MCF 10A (cell line): ENCODE measurements at regions of chr1 and their contacts with region 1.

Region 1: DNA sequence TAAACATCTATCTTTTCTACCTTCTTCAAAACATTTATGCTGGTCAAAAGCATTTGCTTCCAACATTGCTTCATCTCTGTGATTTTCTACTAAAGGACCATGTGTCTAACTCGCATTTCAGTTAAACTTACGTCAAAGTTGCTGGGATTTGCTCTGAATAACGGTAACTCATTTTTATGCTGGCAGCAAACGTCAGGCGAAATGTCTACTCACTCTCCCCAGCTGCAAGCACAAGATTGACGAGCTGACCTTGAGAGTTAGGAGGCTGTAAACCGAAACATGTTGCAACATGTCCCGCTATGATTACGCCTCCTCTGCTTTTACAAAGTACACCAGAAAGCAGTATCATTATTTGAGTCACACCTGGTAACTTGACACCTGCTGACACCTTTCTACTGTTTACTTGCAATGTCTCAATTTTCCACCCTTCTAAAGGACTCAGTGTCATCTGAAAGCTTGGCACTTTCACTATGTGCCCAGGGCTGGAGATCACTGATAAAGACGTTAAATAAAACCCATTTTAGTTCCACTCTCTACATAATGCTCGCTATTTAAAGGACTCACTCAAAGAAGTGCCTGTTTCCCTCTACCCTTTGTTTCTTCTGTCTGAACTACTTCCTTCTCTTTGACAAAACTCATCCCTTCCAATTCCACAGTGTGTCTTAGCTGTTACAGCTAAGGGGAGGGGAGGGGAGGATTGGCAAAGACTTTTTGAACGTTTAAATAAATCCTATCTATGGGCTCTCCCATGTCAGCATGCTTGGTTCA is 111.9 kb downstream of the PTPN14 start:
- DNase-seq: peak; percentile 100
- H3K4me3 Mint-ChIP-seq: peak overlapping the region; percentile 65
- H3K27ac Mint-ChIP-seq: peak overlapping the region; percentile 99
- H3K4me1 Mint-ChIP-seq: peaks cover 61% of the 10 kb centered on the region
- H3K27me3 Mint-ChIP-seq: no peaks in the 10 kb centered on the region
- CTCF ChIP-seq: no peak

Region 2: DNA sequence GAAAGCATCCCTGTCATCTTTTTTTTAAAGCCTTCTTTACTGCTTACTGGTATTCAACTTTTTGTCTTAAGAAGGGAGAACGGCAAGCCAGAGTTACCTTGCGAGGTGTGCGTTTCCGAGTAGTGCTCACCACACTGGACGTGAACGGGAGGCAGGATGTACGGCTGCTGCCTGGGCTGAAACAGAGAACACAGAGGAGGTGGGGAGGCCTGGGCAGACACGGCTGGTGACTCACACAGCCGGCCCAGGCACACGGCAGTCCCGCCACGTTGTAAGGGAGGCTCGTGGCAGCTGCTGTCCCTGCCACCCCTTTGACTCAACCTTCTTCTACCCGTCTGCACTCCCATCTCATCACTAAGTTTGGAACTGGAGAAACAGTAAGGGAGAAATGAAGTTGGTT is 52.8 kb before region 1 on chr1:
- CTCF ChIA-PET with region 1: interaction called, 4 read pairs
- POLR2A ChIA-PET with region 1: interaction called, 10 read pairs
- intact Hi-C with region 1: no loop called
- DNase-seq: peak; percentile 83
- H3K4me3 Mint-ChIP-seq: no peak overlapping the region
- H3K27ac Mint-ChIP-seq: peak overlapping the region; percentile 76
- H3K4me1 Mint-ChIP-seq: peaks cover 14% of the 10 kb centered on the region
- H3K27me3 Mint-ChIP-seq: no peaks in the 10 kb centered on the region
- CTCF ChIP-seq: no peak

Region 3: GRCh38 chr1:214416417-214416816 is 23.1 kb before region 1 on chr1:
- CTCF ChIA-PET with region 1: interaction called, 8 read pairs
- POLR2A ChIA-PET with region 1: interaction called, 143 read pairs
- intact Hi-C with region 1: loop called (anchors 2 kb)
- DNase-seq: peak; percentile 80
- H3K4me3 Mint-ChIP-seq: no peak overlapping the region
- H3K27ac Mint-ChIP-seq: peak overlapping the region; percentile 69
- H3K4me1 Mint-ChIP-seq: peaks cover 67% of the 10 kb centered on the region
- H3K27me3 Mint-ChIP-seq: no peaks in the 10 kb centered on the region
- CTCF ChIP-seq: no peak

Region 4: DNA sequence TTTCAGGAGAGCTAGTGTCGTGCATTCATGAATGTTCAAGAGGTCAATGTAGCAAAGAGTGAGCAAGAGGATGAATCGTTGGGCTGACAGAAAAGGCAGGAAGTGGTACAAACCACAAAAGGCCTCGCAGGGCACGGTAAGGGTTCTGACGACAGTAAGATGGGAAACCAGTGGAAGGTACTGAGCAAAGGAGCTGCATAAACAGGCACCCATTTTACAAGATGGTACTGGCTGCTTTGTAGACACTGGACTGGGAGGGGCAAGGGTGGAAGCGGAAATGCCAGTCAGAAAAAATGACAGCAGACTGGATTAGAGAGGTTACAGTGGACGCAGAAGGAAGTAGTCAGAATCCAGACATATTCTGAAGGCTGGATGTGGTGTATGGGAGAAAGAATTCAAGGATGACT is 11.7 kb before region 1 on chr1:
- CTCF ChIA-PET with region 1: interaction called, 10 read pairs
- POLR2A ChIA-PET with region 1: interaction called, 143 read pairs
- intact Hi-C with region 1: loop called (anchors 1 kb)
- DNase-seq: peak; percentile 97
- H3K4me3 Mint-ChIP-seq: peak overlapping the region; percentile 15
- H3K27ac Mint-ChIP-seq: peak overlapping the region; percentile 82
- H3K4me1 Mint-ChIP-seq: peaks cover 63% of the 10 kb centered on the region
- H3K27me3 Mint-ChIP-seq: no peaks in the 10 kb centered on the region
- CTCF ChIP-seq: no peak

Region 5: DNA sequence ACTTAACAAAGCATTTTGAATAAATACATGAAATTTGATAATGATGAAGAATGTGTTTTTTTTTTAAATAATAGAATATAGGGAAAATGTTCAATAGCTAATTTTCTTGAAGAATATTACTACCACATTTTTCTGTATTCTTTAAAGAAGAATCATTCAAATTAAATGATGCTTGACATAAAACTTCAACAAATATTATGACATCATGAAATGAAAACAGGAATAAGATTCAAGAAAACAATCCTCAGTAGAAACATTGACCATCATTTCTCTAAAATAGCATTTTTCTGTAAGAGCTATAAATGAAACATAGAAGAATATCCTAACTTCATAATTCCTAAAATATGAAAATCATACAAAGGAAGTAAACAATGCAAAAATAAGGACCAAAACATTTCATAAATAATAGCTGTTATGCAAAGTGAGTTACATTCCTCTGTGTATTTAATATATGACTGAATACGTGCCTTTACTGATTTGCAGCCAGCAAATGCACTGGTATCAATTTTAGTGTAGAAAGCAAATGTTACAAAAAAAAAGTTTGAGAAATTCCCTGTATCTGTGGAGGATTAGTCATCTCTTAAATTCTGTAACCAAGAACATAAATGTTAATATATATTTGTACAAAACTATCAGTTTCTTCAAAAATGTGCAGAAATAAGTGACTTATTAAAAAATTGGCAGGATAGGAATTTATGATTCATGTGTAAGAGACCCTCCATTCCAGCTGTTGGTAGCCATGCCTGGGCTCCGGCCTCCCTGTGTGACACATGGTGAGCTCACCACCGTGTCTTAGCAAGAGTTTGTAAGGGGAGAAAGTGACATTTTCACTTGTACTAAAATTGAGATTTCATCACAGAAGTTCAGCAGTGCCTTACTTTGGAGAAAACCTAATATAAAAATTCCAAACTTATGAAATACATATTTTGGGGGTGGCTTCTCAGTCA is 126.9 kb after region 1 on chr1:
- CTCF ChIA-PET with region 1: interaction called, 25 read pairs
- POLR2A ChIA-PET with region 1: interaction called, 307 read pairs
- intact Hi-C with region 1: no loop called
- DNase-seq: peak; percentile 85
- H3K4me3 Mint-ChIP-seq: no peak overlapping the region
- H3K27ac Mint-ChIP-seq: peak overlapping the region; percentile 36
- H3K4me1 Mint-ChIP-seq: peaks cover 51% of the 10 kb centered on the region
- H3K27me3 Mint-ChIP-seq: no peaks in the 10 kb centered on the region
- CTCF ChIP-seq: no peak

Region 6: GRCh38 chr1:214719207-214719606 is 279.7 kb after region 1 on chr1:
- CTCF ChIA-PET with region 1: no interaction called
- POLR2A ChIA-PET with region 1: no interaction called
- intact Hi-C with region 1: no loop called
- DNase-seq: no peak
- H3K4me3 Mint-ChIP-seq: no peak overlapping the region
- H3K27ac Mint-ChIP-seq: no peak overlapping the region
- H3K4me1 Mint-ChIP-seq: peaks cover 5% of the 10 kb centered on the region
- H3K27me3 Mint-ChIP-seq: peaks cover 46% of the 10 kb centered on the region
- CTCF ChIP-seq: no peak